Activated T-helper 1 cell treated with anti-CD3 and anti-CD28 coated beads, Interleukin-12 subunit alpha, Interleukin-12 subunit beta, Interleukin-2, Interleukin-4 antibody, amounts not matched to agents 30 ng/mL and 10 ng/mL and 1 ng/mL, durations not matched to agents 14 hours and 24 hours and 36 hours (primary cell): ENCODE measurements at regions of chr2 and their contacts with region 1.

Region 1: GRCh38 chr2:95402370-95403203 is at the start of gene FAHD2A:
- DNase-seq: peak; percentile 95
- H3K4me3 Mint-ChIP-seq: peak within 1 kb of the TSS; percentile 99
- H3K27ac Mint-ChIP-seq: peak within 1 kb of the TSS; percentile 96
- H3K4me1 Mint-ChIP-seq: peaks cover 22% of the 10 kb centered on the region
- H3K27me3 Mint-ChIP-seq: no peaks in the 10 kb centered on the region
- total RNA-seq, gene FAHD2A: 33.2 and 34.9 TPM in 2 replicates

Region 2: DNA sequence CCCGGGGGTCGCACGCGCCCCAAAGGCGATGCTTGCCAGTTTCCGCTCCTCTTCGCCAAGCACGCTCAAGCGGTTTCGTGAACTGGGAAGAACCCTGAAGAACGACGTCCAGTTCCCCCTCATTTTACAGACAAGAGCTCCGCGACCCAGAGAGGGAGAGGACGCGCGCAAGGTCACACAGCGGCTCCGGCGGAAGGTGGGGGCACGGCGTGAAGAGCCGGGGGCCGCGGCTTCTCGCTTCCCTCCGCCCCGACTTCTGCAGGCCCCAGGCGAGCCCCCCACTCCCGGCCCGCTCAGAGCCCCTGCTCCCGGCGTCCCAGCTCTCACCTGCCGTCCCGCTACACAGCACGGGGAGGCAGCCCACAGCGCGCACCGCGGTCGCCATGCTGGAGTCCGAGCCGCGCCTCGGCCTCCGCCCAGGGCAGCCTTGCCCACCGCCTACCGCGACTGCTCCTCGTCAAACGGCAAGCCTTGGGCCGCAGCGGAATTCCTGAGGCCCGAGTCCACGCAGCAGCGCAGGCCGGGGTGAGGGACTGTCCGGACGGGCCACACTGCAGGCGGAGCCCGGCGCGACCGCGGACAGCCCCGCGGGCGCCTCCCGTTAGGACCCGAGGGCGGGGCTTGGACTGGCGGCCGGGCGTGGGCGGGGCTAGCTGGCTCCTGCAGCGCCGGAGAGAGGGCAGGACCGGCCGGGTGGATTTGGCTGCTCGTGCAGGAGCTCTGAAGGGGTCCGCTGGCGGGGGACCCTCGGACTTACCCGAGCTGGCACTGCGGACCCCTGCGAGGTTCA is 281.0 kb before region 1 on chr2 and contains the start of gene MRPS5:
- intact Hi-C with region 1: loop called (anchors 5 kb)
- DNase-seq: peak; percentile 84
- H3K4me3 Mint-ChIP-seq: peak within 1 kb of the TSS; percentile 97
- H3K27ac Mint-ChIP-seq: peak within 1 kb of the TSS; percentile 95
- H3K4me1 Mint-ChIP-seq: peaks cover 46% of the 10 kb centered on the region
- H3K27me3 Mint-ChIP-seq: peaks cover 2% of the 10 kb centered on the region
- total RNA-seq, gene MRPS5: 89.6 and 93.6 TPM in 2 replicates

Region 3: GRCh38 chr2:95165129-95166064 is 237.2 kb before region 1 on chr2 and contains the start of gene ZNF2:
- intact Hi-C with region 1: loop called (anchors 1 kb)
- DNase-seq: peak; percentile 96
- H3K4me3 Mint-ChIP-seq: peak within 1 kb of the TSS; percentile 99
- H3K27ac Mint-ChIP-seq: peak within 1 kb of the TSS; percentile 92
- H3K4me1 Mint-ChIP-seq: peaks cover 42% of the 10 kb centered on the region
- H3K27me3 Mint-ChIP-seq: no peaks in the 10 kb centered on the region
- total RNA-seq, gene ZNF2: 3.8 and 3.9 TPM in 2 replicates

Region 4: GRCh38 chr2:95207111-95207961 is 195.3 kb before region 1 on chr2 and contains the start of gene ZNF892:
- intact Hi-C with region 1: loop called (anchors 2 kb)
- DNase-seq: peak; percentile 74
- H3K4me3 Mint-ChIP-seq: peak within 1 kb of the TSS; percentile 90
- H3K27ac Mint-ChIP-seq: peak within 1 kb of the TSS; percentile 54
- H3K4me1 Mint-ChIP-seq: peaks cover 30% of the 10 kb centered on the region
- H3K27me3 Mint-ChIP-seq: no peaks in the 10 kb centered on the region
- total RNA-seq, gene ZNF892: 4.7 and 5.9 TPM in 2 replicates

Region 5: GRCh38 chr2:95526360-95527341 is 124.1 kb after region 1 on chr2:
- intact Hi-C with region 1: loop called (anchors 5 kb)
- DNase-seq: peak; percentile 61
- H3K4me3 Mint-ChIP-seq: peak overlapping the region; percentile 91
- H3K27ac Mint-ChIP-seq: peak overlapping the region; percentile 92
- H3K4me1 Mint-ChIP-seq: peaks cover 31% of the 10 kb centered on the region
- H3K27me3 Mint-ChIP-seq: peaks cover 7% of the 10 kb centered on the region

Region 6: DNA sequence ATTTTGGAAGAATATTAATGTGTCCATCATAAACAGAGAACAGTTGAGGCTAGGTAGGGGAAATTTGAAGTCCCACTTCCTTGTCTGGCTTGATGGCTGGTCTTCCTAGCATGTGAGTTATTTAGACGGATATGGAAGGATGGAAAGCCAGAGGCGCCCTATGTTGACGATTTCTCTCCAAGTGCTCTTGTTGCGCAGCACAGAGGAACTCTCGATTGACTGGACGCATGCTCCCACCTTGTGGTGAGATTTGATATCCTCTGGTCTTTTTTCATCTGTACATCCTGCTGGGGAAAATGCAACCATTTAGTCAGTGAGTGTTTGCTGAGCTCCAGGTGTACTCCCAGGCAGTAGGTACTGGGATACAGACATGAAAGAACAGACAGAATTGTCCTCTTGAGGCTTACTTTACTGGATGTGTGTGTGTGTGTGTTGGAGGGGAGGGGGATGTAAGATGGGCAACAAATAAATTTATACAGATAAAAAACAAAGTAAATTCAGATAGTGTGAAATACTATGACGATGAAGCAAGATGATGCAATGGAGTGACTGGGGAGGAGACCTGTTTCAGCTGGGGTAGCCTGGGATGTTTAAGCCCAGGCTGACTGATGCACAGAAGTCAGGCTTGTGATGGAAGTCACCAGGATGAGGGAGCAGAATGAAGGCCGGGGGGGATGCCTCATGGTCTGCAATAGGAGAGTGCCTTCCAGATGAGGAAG is 326.4 kb after region 1 on chr2:
- intact Hi-C with region 1: loop called (anchors 5 kb)
- DNase-seq: peak; percentile 6
- H3K4me3 Mint-ChIP-seq: no peak overlapping the region
- H3K27ac Mint-ChIP-seq: no peak overlapping the region
- H3K4me1 Mint-ChIP-seq: no peaks in the 10 kb centered on the region
- H3K27me3 Mint-ChIP-seq: peaks cover 10% of the 10 kb centered on the region